Tibial artery (tissue), 4 donors: ENCODE measurements at regions of chr11 and their contacts with region 1.

Region 1: GRCh38 chr11:83317757-83318690 is 31.9 kb upstream of the CCDC90B start:
- DNase-seq: no peak
- H3K4me3 ChIP-seq: no peak overlapping the region
- H3K27ac ChIP-seq: no peak overlapping the region
- H3K4me1 ChIP-seq: no peaks in the 10 kb centered on the region
- H3K27me3 ChIP-seq: no peaks in the 10 kb centered on the region
- CTCF ChIP-seq: no peak

Region 2: DNA sequence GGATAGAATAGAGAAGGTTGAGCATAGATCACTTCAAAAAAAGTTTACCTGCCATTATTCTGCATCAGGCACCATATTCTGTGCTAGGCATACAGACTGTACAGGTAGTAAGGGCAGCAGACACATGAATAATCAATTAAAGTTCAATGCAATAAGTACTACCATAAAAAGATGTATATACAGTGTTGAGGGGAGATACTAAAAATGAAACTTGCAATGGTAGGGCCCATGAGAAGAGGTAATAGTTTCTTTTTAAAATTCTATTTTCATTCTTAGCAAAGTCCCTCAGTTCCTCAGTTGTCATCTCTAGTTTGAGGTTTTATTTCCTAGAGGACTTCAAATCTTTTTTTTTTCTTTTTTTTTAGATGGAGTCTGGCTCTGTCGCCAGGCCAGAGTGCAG is 1404.2 kb before region 1 on chr11:
- intact Hi-C with region 1: loop called (anchors 5 kb)
- DNase-seq: no peak
- H3K4me3 ChIP-seq: no peak overlapping the region
- H3K27ac ChIP-seq: no peak overlapping the region
- H3K4me1 ChIP-seq: peaks cover 0 to 34% (median 1%) of the 10 kb centered on the region in 4 donors
- H3K27me3 ChIP-seq: no peaks in the 10 kb centered on the region
- CTCF ChIP-seq: no peak

Region 3: DNA sequence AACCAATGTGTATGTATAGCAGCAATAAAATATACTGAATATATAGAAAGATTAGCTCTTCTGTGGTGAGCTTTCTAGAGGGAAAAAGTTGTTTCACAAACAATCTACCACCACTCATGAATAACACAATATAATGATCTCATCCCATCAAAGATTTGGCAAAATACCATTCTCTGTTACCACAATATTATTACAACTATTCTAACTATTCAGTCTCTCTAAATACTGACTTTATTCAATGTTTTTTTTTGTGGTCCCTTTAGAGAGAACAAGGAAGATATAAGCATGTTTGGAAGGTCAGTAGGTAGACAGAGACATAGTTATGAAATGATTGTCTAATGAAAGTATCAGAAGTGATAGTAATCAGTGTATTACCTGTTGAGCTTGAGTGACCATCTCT is 39.7 kb before region 1 on chr11:
- intact Hi-C with region 1: no loop called
- DNase-seq: no peak
- H3K4me3 ChIP-seq: no peak overlapping the region
- H3K27ac ChIP-seq: no peak overlapping the region
- H3K4me1 ChIP-seq: peaks cover 0 to 22% (median 12%) of the 10 kb centered on the region in 4 donors
- H3K27me3 ChIP-seq: no peaks in the 10 kb centered on the region
- CTCF ChIP-seq: no peak